Common myeloid progenitor, CD34-positive (primary cell): ENCODE measurements at regions of chr1 and their contacts with region 1.

Region 1: GRCh38 chr1:113442131-113442530 is 51.8 kb downstream of the MAGI3 start:
- DNase-seq: no peak
- H3K4me3 ChIP-seq: no peak overlapping the region
- H3K27ac ChIP-seq: no peak overlapping the region
- H3K4me1 ChIP-seq: no peaks in the 10 kb centered on the region
- H3K27me3 ChIP-seq: no peaks in the 10 kb centered on the region

Region 2: DNA sequence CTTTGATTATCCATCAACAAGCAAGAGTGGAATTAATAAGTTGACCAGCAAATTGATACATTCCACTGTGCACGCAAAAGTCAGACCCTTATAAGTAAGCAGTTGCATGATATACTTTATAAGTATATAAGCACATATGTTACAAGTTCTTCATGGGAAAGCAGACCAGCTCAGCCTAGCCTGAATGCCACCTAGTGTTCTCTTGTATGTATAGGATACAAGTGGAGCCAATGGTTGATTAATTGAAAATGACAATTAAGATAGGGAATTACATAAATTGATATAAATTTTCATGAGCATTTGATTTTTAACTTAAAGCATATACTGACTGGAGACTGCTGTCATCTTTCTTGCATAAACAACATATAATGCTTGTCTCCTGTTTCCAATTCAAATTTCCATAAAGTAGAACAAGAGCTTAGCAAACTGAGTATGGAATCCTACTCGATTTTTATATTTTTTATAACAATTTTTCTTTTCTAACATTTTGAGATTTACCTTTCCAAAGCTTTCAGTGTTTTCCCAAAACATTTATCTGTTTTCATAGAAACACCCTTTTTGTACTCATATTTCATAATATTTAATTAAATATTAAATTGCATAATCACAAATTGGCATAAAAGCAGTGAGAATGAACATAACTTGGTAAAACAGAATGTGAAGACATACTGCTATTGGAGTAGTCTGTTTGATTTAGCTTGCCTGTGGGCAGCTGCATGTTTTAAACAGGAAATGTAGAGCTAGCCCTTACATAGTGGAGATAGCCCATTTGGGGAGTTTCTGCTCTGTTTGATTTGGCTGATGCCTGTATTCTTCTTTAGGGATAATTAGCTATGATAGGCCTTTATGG is 11.0 kb after region 1 on chr1:
- CTCF ChIA-PET with region 1: interaction called, 10 read pairs
- POLR2A ChIA-PET with region 1: no interaction called
- DNase-seq: peak; percentile 34 to 62 (median 60)
- H3K4me3 ChIP-seq: no peak overlapping the region
- H3K27ac ChIP-seq: no peak overlapping the region
- H3K4me1 ChIP-seq: peaks cover 0 to 10% (median 0%) of the 10 kb centered on the region in 4 experiments
- H3K27me3 ChIP-seq: no peaks in the 10 kb centered on the region